Pancreas (tissue), 10 donors: ENCODE measurements at regions of chr5 and their contacts with region 1.

Region 1: DNA sequence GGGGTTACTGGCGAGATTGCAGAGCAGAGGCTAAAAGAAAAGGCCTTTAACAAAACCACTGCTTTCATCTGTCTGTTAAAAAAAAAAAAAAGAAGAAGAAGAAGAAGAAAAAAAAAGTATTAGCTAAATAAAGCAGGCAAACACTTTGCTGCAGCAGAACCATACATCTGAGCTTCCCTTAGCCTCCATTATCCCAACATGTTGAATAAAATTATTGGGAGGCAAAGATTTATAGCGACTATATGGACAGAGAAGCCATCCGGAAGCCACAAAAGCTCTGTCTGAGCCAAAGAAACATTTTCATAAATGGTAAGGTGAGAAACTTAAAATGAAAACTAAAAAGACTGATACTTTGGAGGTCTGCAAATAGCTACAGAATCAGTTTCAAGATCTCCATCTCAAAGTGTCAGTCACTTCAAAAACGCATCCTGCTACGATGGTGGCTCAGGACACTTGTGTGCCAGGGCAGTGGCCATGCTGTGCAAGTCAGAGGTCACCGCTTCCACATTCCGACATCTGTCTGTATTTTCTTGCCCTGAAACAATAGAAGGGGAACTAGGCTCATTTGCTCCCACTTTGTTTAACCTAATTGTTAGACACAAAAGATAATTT is 9.6 kb downstream of the EFNA5 start:
- DNase-seq: no peak
- ATAC-seq: no peak
- H3K4me3 ChIP-seq: no peak overlapping the region
- H3K27ac ChIP-seq: no peak overlapping the region
- H3K4me1 ChIP-seq: no peaks in the 10 kb centered on the region
- H3K27me3 ChIP-seq: no peaks in the 10 kb centered on the region
- CTCF ChIP-seq: no peak

Region 2: GRCh38 chr5:107456281-107456715 is 204.8 kb before region 1 on chr5:
- intact Hi-C with region 1: loop called in 1 of 3 experiments (anchors 5 kb)
- DNase-seq: no peak
- ATAC-seq: no peak
- H3K4me3 ChIP-seq: no peak overlapping the region
- H3K27ac ChIP-seq: no peak overlapping the region
- H3K4me1 ChIP-seq: no peaks in the 10 kb centered on the region
- H3K27me3 ChIP-seq: no peaks in the 10 kb centered on the region
- CTCF ChIP-seq: no peak

Region 3: DNA sequence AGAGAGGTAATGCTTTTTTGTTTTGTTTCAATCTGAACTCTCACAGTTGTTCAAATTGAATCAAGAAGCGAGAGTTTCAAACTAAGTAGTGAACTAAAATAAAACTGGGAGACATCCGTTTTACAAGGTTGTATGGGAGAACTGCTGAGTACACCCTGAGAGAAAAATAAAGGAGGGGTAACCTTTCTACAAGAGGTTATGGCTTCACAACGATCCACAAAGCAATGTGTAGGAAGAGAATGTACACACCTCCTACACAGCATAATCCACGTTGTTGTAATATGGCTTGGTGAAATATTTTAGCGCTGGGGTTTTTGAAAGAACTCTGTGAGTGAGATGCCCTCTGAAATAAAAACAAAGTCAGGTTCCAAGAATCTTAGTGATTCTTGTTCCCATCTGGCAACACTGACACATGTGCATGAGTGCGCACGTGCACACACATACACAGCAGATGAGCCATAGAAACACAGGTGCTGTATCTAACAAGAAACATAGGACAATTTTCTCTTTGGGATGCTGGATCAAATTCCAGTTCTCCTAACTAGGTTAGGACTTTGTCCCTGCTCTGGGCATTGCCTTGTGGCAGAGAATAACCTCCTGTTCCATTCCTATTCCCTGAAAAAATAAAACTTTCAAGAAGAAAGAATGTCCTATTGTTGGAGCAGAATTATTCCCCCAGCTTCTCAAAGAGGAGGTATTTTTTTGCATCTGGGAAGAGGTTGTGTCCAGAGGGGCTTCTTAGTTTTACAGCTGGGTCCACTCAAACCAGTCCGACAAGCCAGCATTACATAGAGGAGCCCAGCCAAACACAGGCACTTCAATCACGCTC is 104.0 kb after region 1 on chr5:
- intact Hi-C with region 1: no loop called
- DNase-seq: no peak
- ATAC-seq: no peak
- H3K4me3 ChIP-seq: no peak overlapping the region
- H3K27ac ChIP-seq: no peak overlapping the region
- H3K4me1 ChIP-seq: no peaks in the 10 kb centered on the region
- H3K27me3 ChIP-seq: no peaks in the 10 kb centered on the region
- CTCF ChIP-seq: no peak